ENCODE measurements at regions of chr1 and their contacts with region 1.

Region 1: GRCh38 chr1:31065310-31066217 is at the start of gene PUM1:
- DNase-seq: peak; percentile 96 to 99 (median 98)
- ATAC-seq: peak; percentile 99 to 100 (median 100)
- H3K4me3 ChIP-seq: peak within 1 kb of the TSS; percentile 67 to 96 (median 73)
- H3K27ac ChIP-seq: peak within 1 kb of the TSS; percentile 85 to 99 (median 92)
- H3K4me1 ChIP-seq: peaks cover 4 to 40% (median 30%) of the 10 kb centered on the region in 12 donors
- H3K27me3 ChIP-seq: no peaks in the 10 kb centered on the region
- CTCF ChIP-seq: peak in 2 of 12 donors; percentile 10 to 25
- POLR2A ChIP-seq: peak in 1 of 2 donors; percentile 59
- total RNA-seq, gene PUM1: 60.4 to 96.3 (median 75.8) TPM

Region 2: DNA sequence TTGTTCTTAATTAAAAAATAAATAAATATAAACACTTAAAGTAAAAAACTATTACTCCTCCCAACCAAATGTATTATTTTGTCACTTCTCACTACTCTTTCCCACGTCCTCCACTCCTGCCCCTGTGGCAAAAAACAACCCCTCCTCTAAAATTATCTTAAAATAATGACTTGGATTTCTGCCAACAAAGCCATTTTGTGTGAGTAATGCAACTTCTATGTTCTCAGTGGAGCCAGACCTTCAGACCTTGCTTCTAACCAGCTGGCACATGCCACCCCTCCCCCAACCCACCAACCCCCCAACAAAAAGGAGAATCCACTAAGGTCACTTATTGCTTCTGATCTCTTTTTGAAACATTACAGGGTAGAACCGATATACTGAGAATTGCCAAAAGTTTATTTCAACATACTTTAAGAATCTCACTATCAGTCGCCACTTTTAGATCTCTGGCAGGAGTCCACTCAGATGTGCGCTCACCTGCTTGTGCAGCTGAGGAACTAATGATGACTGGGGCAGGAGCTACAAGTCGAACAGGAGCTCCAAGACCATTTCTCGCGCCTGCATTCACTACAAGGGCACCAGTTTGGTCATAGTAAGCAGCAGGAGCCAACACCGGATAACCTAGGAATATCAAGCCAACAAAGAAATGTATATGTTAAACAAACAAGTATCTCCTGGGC is 98.7 kb before region 1 on chr1:
- intact Hi-C with region 1: loop called in 5 of 10 experiments (anchors 5 to 10 kb)
- DNase-seq: peak in 1 of 5 donors; percentile 22
- ATAC-seq: peak in 2 of 4 donors; percentile 20 to 35
- H3K4me3 ChIP-seq: no peak overlapping the region
- H3K27ac ChIP-seq: peak overlapping the region in 11 of 12 donors; percentile 14 to 86 (median 63)
- H3K4me1 ChIP-seq: peaks cover 9 to 74% (median 38%) of the 10 kb centered on the region in 12 donors
- H3K27me3 ChIP-seq: no peaks in the 10 kb centered on the region
- CTCF ChIP-seq: no peak
- POLR2A ChIP-seq: no peak

Region 3: GRCh38 chr1:31007462-31007991 is 58.0 kb before region 1 on chr1:
- intact Hi-C with region 1: loop called in 1 of 10 experiments (anchors 2 kb)
- DNase-seq: no peak
- ATAC-seq: no peak
- H3K4me3 ChIP-seq: no peak overlapping the region
- H3K27ac ChIP-seq: peak overlapping the region in 1 of 12 donors; percentile 53
- H3K4me1 ChIP-seq: peaks cover 0 to 76% (median 40%) of the 10 kb centered on the region in 12 donors
- H3K27me3 ChIP-seq: no peaks in the 10 kb centered on the region
- CTCF ChIP-seq: no peak
- POLR2A ChIP-seq: no peak

Region 4: DNA sequence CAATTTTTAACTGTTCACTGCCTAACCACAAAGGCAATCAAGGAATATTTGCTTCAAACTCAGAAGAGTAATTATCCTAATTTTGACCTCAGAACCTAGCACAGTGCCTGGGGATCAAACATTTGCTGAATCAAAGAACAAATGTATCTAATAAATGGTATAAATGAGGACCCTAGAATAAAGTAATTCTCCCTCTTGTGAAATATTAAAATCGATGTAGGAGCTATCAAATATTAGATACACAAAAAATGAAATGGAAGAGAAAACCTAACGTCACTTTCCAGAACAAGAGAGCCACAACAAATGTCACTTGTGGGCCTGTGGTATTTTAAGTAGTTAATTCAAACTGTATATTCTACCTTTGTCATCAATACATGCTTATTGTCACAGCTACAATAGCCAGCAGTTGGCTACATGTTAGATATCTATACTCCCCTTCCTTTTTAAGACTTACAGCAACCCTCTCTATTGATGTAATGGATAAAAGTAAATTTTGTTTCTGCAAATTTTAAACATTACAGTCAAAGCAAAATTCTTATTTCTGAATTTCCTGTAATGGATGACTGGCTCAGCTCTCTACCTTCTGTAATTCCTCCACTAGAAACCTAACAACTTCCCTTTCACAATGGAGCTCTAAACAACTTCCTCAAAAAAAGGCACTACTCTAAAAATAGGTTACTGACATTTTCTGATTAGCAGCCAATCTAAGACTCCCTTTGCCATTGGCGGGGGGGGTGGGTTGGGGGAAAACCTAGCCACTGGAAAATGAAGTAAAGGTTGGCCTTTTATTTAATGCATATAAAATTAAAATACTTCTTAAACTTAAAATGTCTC is 37.7 kb before region 1 on chr1:
- intact Hi-C with region 1: loop called in 1 of 10 experiments (anchors 5 kb)
- DNase-seq: no peak
- ATAC-seq: peak in 3 of 4 donors; percentile 64 to 81 (median 75)
- H3K4me3 ChIP-seq: no peak overlapping the region
- H3K27ac ChIP-seq: peak overlapping the region in 6 of 12 donors; percentile 9 to 68 (median 24)
- H3K4me1 ChIP-seq: peaks cover 7 to 79% (median 48%) of the 10 kb centered on the region in 12 donors
- H3K27me3 ChIP-seq: no peaks in the 10 kb centered on the region
- CTCF ChIP-seq: no peak
- POLR2A ChIP-seq: no peak

Region 5: DNA sequence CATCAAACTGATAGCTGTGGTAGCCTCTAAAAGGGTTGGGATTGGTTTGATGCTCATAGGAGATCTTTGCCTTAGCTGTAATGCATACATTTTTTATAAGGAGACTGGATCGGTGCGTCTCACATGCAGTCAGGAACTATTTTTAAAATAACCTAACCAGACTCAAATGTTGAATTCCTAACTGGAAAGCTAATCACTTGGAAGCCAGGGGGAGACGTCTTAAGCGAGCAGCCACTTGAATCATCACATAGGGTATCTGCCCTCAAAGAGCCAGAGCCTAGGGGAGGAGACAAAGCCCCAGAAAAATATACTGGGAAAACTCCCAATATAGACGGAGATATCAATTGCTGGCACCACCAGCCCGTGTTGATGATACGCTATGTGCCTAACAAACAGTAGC is 61.7 kb after region 1 on chr1:
- intact Hi-C with region 1: no loop called
- DNase-seq: no peak
- ATAC-seq: no peak
- H3K4me3 ChIP-seq: no peak overlapping the region
- H3K27ac ChIP-seq: no peak overlapping the region
- H3K4me1 ChIP-seq: no peaks in the 10 kb centered on the region
- H3K27me3 ChIP-seq: peaks cover 0 to 7% (median 0%) of the 10 kb centered on the region in 9 donors
- CTCF ChIP-seq: no peak
- POLR2A ChIP-seq: no peak

Region 6: DNA sequence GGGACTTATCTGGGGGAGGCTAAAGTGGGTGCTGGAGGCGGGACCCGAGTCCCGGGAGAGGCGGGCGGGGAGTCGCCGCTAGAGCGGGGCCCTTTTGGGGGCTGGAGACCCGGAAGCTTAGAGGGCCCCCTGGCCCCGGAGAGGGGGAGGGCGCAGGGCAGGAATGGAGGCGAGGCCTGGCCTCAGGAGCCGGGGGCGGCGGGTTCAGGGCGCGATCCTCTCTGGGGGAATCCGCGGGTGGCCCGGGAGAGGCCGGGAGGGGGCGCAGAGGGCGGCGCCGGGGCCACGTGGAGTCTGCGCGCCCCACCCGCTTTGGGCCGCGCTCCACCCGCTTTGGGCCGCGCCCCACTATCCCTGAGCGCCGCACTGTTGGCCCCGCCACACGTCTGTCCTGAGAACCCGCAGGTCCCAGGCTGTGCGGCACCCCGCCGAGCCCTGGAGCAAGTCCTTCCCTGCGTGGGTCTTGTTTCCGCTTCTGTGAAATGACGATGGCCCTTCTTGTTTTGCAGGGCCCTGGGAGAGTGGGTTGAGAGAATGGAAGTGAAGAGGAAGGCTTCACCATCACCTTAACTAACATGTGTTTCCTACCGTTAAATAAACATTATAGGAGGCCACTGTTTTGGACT is 89.8 kb after region 1 on chr1:
- intact Hi-C with region 1: loop called in 3 of 10 experiments (anchors 10 kb)
- DNase-seq: peak; percentile 52 to 78 (median 66)
- ATAC-seq: peak; percentile 76 to 94 (median 92)
- H3K4me3 ChIP-seq: peak overlapping the region; percentile 33 to 78 (median 67)
- H3K27ac ChIP-seq: peak overlapping the region in 11 of 12 donors; percentile 52 to 83 (median 66)
- H3K4me1 ChIP-seq: peaks cover 0 to 11% (median 6%) of the 10 kb centered on the region in 12 donors
- H3K27me3 ChIP-seq: no peaks in the 10 kb centered on the region
- CTCF ChIP-seq: peak in 8 of 12 donors; percentile 24 to 55 (median 40)
- POLR2A ChIP-seq: no peak

Measured in heart left ventricle (tissue), 16 donors.